ENCODE measurements at regions of chr19 and their contacts with region 1.

Region 1: GRCh38 chr19:7680606-7681339 is at the start of gene TRAPPC5:
- DNase-seq: peak; percentile 88
- H3K4me3 Mint-ChIP-seq: peak within 1 kb of the TSS; percentile 93
- H3K27ac Mint-ChIP-seq: peak within 1 kb of the TSS; percentile 96
- H3K4me1 Mint-ChIP-seq: peaks cover 45% of the 10 kb centered on the region
- H3K27me3 Mint-ChIP-seq: peaks cover 14% of the 10 kb centered on the region
- total RNA-seq, gene TRAPPC5: 72.2 and 86.8 TPM in 2 replicates

Region 2: GRCh38 chr19:7312816-7313215 is 368.0 kb before region 1 on chr19:
- intact Hi-C with region 1: no loop called
- DNase-seq: no peak
- H3K4me3 Mint-ChIP-seq: no peak overlapping the region
- H3K27ac Mint-ChIP-seq: no peak overlapping the region
- H3K4me1 Mint-ChIP-seq: no peaks in the 10 kb centered on the region
- H3K27me3 Mint-ChIP-seq: no peaks in the 10 kb centered on the region

Region 3: GRCh38 chr19:7349961-7350711 is 330.6 kb before region 1 on chr19:
- intact Hi-C with region 1: loop called (anchors 5 kb)
- DNase-seq: no peak
- H3K4me3 Mint-ChIP-seq: peak overlapping the region; percentile 87
- H3K27ac Mint-ChIP-seq: peak overlapping the region; percentile 78
- H3K4me1 Mint-ChIP-seq: peaks cover 67% of the 10 kb centered on the region
- H3K27me3 Mint-ChIP-seq: no peaks in the 10 kb centered on the region

Region 4: DNA sequence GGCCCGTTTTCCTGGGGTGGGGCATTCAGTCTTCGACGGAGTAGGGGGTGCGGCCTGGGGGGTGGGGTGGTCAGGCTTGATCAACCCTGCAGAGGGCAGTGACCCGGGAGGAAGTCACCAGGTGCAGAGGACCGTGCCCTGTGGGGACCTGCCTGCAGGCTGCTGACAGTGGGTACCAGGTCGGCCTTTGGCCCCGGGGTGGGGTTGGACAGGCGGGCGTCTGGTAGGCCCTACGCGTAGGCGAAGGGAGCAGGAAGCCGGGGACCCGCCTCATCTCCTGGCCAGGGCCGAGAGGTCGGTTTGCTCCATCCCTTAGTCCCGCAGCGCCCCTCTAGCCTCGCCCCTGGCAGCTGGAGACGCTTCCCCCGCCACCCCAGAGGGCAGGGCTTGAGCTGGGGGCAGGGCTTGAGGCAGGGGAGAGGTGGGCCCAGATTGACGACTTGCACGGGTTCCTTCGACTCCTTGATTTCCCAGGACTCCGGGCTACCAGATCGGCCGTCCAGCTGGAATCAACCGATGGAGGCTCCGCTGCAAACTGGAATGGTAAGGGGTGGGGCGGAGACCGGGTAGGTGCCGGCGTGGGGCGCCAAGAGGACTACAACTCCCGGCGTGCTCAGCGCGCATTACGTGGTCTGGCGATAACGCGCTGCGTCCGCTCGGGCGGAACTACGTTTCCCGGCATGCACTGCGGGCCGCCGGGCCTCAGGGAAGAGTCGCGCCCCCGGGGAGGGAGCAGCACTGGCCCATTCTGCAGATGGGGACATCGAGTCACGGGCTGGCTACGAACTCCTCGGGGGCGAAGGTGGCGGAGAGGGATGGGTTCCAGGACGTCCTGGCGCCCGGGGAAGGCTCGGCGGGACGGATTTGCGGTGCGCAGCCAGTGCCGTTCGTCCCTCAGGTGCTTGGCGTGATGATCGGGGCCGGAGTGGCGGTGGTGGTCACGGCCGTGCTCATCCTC is 145.5 kb before region 1 on chr19 and contains the start of gene PNPLA6:
- intact Hi-C with region 1: loop called (anchors 1 kb)
- DNase-seq: peak; percentile 91
- H3K4me3 Mint-ChIP-seq: peak within 1 kb of the TSS; percentile 95
- H3K27ac Mint-ChIP-seq: peak within 1 kb of the TSS; percentile 92
- H3K4me1 Mint-ChIP-seq: peaks cover 14% of the 10 kb centered on the region
- H3K27me3 Mint-ChIP-seq: no peaks in the 10 kb centered on the region
- total RNA-seq, gene PNPLA6: 131 and 136 TPM in 2 replicates

Region 5: GRCh38 chr19:7629347-7630054 is 51.3 kb before region 1 on chr19 and contains the starts of genes PET100 and XAB2:
- intact Hi-C with region 1: loop called (anchors 1 kb)
- DNase-seq: peak; percentile 93
- H3K4me3 Mint-ChIP-seq: peak within 1 kb of the TSS; percentile 98
- H3K27ac Mint-ChIP-seq: peak within 1 kb of the TSS; percentile 98
- H3K4me1 Mint-ChIP-seq: peaks cover 31% of the 10 kb centered on the region
- H3K27me3 Mint-ChIP-seq: no peaks in the 10 kb centered on the region
- total RNA-seq, gene PET100: 88.5 and 93.4 TPM in 2 replicates
- total RNA-seq, gene XAB2: 50.7 and 51.2 TPM in 2 replicates

Region 6: GRCh38 chr19:7641288-7642276 is 39.2 kb before region 1 on chr19:
- intact Hi-C with region 1: no loop called
- DNase-seq: no peak
- H3K4me3 Mint-ChIP-seq: no peak overlapping the region
- H3K27ac Mint-ChIP-seq: no peak overlapping the region
- H3K4me1 Mint-ChIP-seq: peaks cover 18% of the 10 kb centered on the region
- H3K27me3 Mint-ChIP-seq: no peaks in the 10 kb centered on the region

Region 7: DNA sequence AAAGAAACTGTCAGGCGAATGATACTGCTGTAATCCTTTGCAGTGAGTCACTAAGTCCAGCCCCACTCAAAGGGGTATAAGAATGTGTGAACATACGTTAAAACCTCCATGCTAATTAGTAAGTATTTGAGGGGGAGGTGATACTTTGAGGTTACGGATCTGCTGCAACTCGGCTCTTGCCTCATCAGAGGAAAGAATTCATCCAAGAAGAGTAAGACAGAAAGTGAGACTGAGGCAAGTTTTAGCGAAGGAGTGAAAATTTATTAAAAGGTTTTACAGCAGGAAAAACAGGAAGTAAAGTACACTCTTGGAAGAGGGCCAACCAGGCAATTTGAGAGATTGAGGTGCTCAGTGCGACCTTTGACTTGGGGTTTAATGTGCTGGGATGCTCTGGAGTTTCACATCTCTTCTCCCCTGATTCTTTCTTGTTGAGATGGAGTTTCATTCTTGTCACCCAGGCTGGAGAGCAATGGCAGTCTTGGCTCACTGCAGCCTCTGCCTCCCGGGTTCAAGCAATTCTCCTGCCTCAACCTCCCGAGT is 92.0 kb after region 1 on chr19:
- intact Hi-C with region 1: loop called (anchors 1 kb)
- DNase-seq: no peak
- H3K4me3 Mint-ChIP-seq: peak overlapping the region; percentile 8
- H3K27ac Mint-ChIP-seq: peak overlapping the region; percentile 61
- H3K4me1 Mint-ChIP-seq: peaks cover 13% of the 10 kb centered on the region
- H3K27me3 Mint-ChIP-seq: peaks cover 19% of the 10 kb centered on the region

Region 8: DNA sequence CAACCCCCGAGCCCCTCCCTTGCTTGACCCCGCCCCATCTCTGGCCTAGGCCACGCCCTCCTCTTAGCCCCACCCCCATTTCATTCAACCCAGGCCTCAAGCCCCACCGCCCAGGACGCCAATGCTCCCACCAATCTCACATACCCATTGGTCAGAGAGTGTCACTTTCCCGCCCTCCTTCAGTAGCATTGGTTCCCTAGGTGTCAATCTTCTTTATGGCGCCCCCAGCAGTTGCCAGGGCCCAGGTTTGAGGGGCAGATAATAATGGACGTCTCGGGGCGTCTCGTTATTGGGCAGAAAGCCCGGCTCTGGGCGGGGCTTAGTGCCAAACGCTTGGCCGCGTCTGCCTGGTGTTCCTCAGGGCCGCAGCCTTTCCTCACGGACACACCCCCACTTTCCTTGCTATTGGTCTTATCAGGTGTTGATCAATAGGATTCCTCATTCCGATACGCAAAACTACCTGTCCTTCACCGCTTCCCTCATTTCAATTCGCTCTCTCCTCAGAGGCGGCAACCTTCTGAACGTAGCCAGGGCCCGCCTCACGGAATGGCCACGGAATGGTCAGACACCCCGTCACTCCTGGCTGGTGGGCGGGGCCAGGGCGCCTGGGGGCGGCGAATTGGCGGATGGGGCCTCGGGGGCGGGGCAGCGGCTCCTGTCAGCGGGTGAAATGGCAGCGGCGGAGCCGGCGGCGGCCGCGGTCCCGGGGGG is 148.9 kb after region 1 on chr19 and contains the start of gene EVI5L:
- intact Hi-C with region 1: loop called (anchors 1 kb)
- DNase-seq: peak; percentile 99
- H3K4me3 Mint-ChIP-seq: peak within 1 kb of the TSS; percentile 86
- H3K27ac Mint-ChIP-seq: peak within 1 kb of the TSS; percentile 69
- H3K4me1 Mint-ChIP-seq: peaks cover 21% of the 10 kb centered on the region
- H3K27me3 Mint-ChIP-seq: peaks cover 15% of the 10 kb centered on the region
- total RNA-seq, gene EVI5L: 4.4 TPM in 2 replicates

Measured in activated T-helper 1 cell treated with anti-CD3 and anti-CD28 coated beads, Interleukin-12 subunit alpha, Interleukin-12 subunit beta, Interleukin-2, Interleukin-4 antibody, amounts not matched to agents 30 ng/mL and 10 ng/mL and 1 ng/mL, durations not matched to agents 14 hours and 24 hours and 36 hours (primary cell).